ENCODE measurements at regions of chr6 and their contacts with region 1.

Region 1: DNA sequence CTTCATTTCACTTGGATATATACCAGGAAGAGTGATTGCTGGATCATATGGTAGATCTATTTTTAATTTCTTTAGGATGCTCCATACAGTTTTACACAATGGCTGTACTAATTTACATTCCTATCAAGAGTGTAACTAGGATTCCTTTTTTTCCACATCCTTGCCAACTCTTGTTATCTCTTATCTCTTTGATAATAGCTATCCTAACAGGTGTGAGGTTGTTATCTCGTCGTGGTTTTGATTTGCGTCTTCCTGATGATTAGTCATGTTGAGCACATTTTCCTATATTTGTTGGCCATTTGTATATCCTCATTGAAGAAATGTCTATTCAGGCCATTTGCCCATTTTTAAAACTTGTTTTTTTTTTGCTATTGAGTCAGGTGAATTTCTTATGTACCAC is 552.4 kb downstream of the RFPL4B start:
- DNase-seq: no peak
- H3K4me3 ChIP-seq: no peak overlapping the region
- H3K27ac ChIP-seq: no peak overlapping the region
- H3K4me1 ChIP-seq: no peaks in the 10 kb centered on the region
- H3K27me3 ChIP-seq: no peaks in the 10 kb centered on the region
- CTCF ChIP-seq: no peak
- POLR2A ChIP-seq: no peak

Region 2: GRCh38 chr6:113634352-113635163 is 735.0 kb after region 1 on chr6:
- intact Hi-C with region 1: loop called (anchors 5 kb)
- DNase-seq: no peak
- H3K4me3 ChIP-seq: no peak overlapping the region
- H3K27ac ChIP-seq: no peak overlapping the region
- H3K4me1 ChIP-seq: no peaks in the 10 kb centered on the region
- H3K27me3 ChIP-seq: no peaks in the 10 kb centered on the region
- CTCF ChIP-seq: no peak
- POLR2A ChIP-seq: no peak

Measured in breast epithelium (tissue), 4 donors.